Mammary epithelial cell (primary cell): ENCODE measurements at regions of chr16 and their contacts with region 1.

Region 1: DNA sequence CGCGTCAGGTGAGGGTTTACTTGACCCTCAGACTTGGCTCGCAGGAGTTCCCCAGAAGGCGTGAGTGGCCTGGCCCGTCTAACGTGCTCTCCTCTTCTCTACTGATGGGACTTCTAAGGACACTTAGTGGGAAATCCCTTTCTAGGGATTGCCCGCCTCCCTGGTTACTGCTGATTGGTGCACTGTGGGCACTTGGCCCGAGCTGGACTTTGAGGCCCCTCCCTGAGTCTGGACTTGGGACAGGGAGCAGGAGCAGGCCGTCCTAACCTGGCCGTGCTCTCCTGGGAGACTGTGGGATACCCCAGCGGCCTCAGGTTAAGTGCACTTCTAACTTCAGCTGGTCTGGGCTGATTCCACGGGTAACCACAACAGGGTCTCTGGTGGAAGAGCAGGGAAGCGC is 14.7 kb downstream of the IFT140 start:
- DNase-seq: no peak
- H3K4me3 ChIP-seq: no peak overlapping the region
- H3K27ac ChIP-seq: no peak overlapping the region
- H3K4me1 ChIP-seq: no peaks in the 10 kb centered on the region
- H3K27me3 ChIP-seq: no peaks in the 10 kb centered on the region
- CTCF ChIP-seq: no peak

Region 2: GRCh38 chr16:1545044-1546040 is 51.8 kb before region 1 on chr16:
- CTCF ChIA-PET with region 1: no interaction called
- dilution Hi-C with region 1: loop called (anchors 5 kb)
- in situ Hi-C with region 1: no loop called
- intact Hi-C with region 1: no loop called
- DNase-seq: no peak
- H3K4me3 ChIP-seq: no peak overlapping the region
- H3K27ac ChIP-seq: no peak overlapping the region
- H3K4me1 ChIP-seq: peaks cover 12% of the 10 kb centered on the region
- H3K27me3 ChIP-seq: no peaks in the 10 kb centered on the region
- CTCF ChIP-seq: no peak

Region 3: GRCh38 chr16:1635070-1635469 is 37.9 kb after region 1 on chr16:
- CTCF ChIA-PET with region 1: no interaction called
- dilution Hi-C with region 1: loop called (anchors 5 kb)
- in situ Hi-C with region 1: no loop called
- intact Hi-C with region 1: no loop called
- DNase-seq: no peak
- H3K4me3 ChIP-seq: no peak overlapping the region
- H3K27ac ChIP-seq: no peak overlapping the region
- H3K4me1 ChIP-seq: no peaks in the 10 kb centered on the region
- H3K27me3 ChIP-seq: no peaks in the 10 kb centered on the region
- CTCF ChIP-seq: no peak

Region 4: DNA sequence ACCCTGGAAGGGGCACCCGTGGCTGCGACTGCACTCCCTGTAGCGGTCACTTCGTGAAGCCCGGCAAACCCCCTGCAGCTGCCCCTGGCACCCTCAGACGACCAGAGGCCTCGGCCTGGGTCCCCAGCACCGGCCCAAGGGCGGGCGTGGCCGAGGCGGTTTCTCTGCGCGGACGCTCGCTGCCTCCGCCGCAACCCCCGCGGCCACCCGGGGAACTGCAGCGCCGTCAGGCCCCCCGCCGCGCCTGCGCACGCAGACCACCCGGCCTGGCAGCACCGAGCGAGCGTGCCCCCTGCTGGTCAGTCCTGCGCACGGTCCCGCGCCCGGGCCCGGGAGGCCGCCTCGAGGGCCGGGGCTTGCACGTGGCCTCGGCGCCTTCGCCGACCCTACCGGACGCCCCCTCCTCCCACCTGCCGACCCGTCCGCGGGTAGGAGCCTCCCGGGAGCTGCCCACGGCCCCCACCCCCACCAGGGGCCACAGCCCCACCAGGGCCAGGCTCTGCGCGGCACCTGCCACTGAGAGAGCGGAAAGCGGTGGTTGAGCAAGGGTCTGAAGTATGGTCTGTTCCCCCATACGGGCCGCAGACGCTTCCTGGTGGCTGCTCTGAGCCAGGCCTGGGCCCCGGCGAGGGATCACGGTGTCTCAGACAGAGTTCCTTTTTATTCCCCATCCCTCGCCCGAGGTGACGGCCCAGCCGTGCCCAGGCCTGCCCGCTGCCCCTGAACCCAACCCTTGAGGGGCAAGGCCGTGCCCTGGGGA is 332.6 kb after region 1 on chr16:
- CTCF ChIA-PET with region 1: no interaction called
- dilution Hi-C with region 1: no loop called
- in situ Hi-C with region 1: no loop called
- intact Hi-C with region 1: no loop called
- DNase-seq: peak; percentile 71
- H3K4me3 ChIP-seq: peak overlapping the region; percentile 10 to 64 (median 45)
- H3K27ac ChIP-seq: no peak overlapping the region
- H3K4me1 ChIP-seq: peaks cover 6% of the 10 kb centered on the region
- H3K27me3 ChIP-seq: no peaks in the 10 kb centered on the region
- CTCF ChIP-seq: peak; percentile 64 to 79